ENCODE measurements at regions of chr12 and their contacts with region 1.

Region 1: GRCh38 chr12:12696562-12697383 is 790 bp upstream of the GPR19 start:
- DNase-seq: peak; percentile 95

Region 2: DNA sequence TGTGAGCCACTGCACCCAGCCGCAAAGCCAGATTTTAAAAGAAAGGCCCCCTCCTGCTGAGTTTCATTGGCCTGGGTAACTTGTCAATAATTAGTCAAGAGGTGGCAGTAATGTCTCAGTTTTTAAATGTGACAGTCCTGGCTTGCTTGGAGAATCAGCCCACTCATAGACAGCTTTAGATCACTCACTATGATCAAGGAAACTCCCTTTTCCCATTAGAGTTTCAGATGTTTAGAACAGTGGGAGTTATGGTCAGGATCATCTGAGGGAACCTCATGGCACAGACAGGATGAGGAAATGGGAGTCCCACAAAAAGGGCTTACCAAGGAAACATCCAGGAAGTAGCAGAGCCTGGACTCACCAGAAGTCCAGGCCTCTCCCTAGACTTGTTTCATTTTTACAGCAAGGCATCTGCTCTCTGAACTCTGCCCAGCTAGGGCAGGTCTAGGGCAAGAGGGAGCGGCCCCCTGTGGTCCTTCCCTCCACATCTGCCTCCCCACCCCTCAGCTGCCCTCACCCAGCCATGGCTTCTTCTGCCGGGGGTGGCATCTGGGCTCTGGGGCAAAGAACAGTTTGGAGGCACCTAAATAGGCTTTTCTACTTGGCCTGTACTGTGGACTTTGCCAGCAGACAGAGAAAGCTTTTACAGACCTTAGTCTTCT is 614.8 kb before region 1 on chr12:
- in situ Hi-C with region 1: loop called (anchors 25 kb)
- DNase-seq: peak; percentile 54

Region 3: GRCh38 chr12:12376646-12377448 is 319.9 kb before region 1 on chr12:
- in situ Hi-C with region 1: loop called (anchors 25 kb)
- DNase-seq: peak; percentile 69